Vagina (tissue), 2 donors: ENCODE measurements at regions of chr20 and their contacts with region 1.

Region 1: GRCh38 chr20:8853805-8854338 is 215.0 kb upstream of the PLCB4 start:
- DNase-seq: no peak
- H3K4me3 ChIP-seq: no peak overlapping the region
- H3K27ac ChIP-seq: peak overlapping the region; percentile 56
- H3K4me1 ChIP-seq: peaks cover 13% of the 10 kb centered on the region
- H3K27me3 ChIP-seq: no peaks in the 10 kb centered on the region
- CTCF ChIP-seq: peak; percentile 57 to 84 (median 77)
- POLR2A ChIP-seq: no peak

Region 2: DNA sequence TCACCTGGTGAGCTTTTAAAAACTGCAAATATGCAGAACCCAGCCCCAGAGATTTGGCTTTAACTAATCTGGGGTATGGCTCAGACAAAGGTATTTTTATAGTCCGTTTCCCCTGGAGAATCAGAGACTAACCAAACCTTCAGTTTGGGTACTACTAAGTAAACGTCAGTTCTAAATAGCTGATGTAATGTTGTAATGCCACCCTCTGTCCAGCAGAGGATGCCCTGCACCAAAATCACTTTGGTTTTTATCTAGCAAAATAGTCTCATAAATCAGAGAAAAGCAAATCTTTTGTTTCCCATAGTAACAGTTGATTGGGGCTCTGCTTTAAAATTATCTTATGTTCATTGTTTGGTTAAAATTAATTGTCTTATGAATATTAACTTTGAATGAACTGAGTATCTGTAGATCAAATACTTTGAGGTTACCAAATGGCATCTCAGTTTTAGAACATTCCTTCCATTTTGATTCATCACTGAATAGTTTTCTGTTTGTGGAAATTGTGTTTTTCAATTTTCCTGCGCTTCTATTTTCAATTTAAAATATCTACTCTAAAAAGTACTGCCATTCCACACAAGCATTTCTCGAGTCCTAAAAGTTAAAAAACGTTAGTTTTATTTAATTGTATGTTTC is 63.3 kb before region 1 on chr20:
- intact Hi-C with region 1: loop called (anchors 10 kb)
- DNase-seq: no peak
- H3K4me3 ChIP-seq: no peak overlapping the region
- H3K27ac ChIP-seq: no peak overlapping the region
- H3K4me1 ChIP-seq: peaks cover 3% of the 10 kb centered on the region
- H3K27me3 ChIP-seq: no peaks in the 10 kb centered on the region
- CTCF ChIP-seq: peak; percentile 77 to 90 (median 81)
- POLR2A ChIP-seq: no peak

Region 3: GRCh38 chr20:9344083-9344920 is 490.4 kb after region 1 on chr20:
- intact Hi-C with region 1: loop called (anchors 10 kb)
- DNase-seq: no peak
- H3K4me3 ChIP-seq: no peak overlapping the region
- H3K27ac ChIP-seq: peak overlapping the region; percentile 0
- H3K4me1 ChIP-seq: peaks cover 6% of the 10 kb centered on the region
- H3K27me3 ChIP-seq: no peaks in the 10 kb centered on the region
- CTCF ChIP-seq: no peak
- POLR2A ChIP-seq: no peak